Caco-2 (cell line): ENCODE measurements at regions of chr2 and their contacts with region 1.

Region 1: GRCh38 chr2:191013932-191014652 is at the start of gene STAT1:
- DNase-seq: peak; percentile 90 to 98
- H3K4me3 ChIP-seq: peak within 1 kb of the TSS; percentile 72
- H3K4me3 Mint-ChIP-seq: no peak within 1 kb of the TSS
- H3K27ac Mint-ChIP-seq: no peak within 1 kb of the TSS
- H3K4me1 ChIP-seq: peaks cover 14% of the 10 kb centered on the region
- H3K4me1 Mint-ChIP-seq: no peaks in the 10 kb centered on the region
- H3K27me3 ChIP-seq: no peaks in the 10 kb centered on the region
- H3K27me3 Mint-ChIP-seq: no peaks in the 10 kb centered on the region
- CTCF ChIP-seq: peak; percentile 13 to 23
- total RNA-seq, gene STAT1: 113 and 126 TPM in 2 replicates

Region 2: DNA sequence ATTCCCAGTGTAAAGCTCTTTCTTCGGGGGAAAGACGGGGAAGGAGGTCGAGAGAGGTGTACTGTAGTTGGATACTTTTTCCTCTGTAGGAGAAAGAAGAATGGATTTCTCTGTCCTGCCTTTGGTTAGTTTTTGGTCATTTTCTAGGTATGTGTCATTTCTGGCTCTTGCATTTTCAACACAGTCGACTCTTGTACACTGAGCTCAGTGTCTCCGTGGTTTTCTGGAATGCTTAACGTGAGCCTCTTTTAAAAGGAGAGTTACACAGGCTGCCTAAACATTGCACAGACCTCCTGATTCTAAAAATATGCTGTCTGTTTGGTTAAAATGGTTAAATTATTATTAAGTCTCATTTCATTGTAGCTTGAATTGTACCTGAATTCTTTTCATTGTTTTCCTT is 155.3 kb before region 1 on chr2:
- CTCF ChIA-PET with region 1: no interaction called
- POLR2A ChIA-PET with region 1: no interaction called
- intact Hi-C with region 1: loop called (anchors 5 kb)
- DNase-seq: no peak
- H3K4me3 ChIP-seq: no peak overlapping the region
- H3K4me3 Mint-ChIP-seq: no peak overlapping the region
- H3K27ac Mint-ChIP-seq: no peak overlapping the region
- H3K4me1 ChIP-seq: peaks cover 48% of the 10 kb centered on the region
- H3K4me1 Mint-ChIP-seq: peaks cover 44% of the 10 kb centered on the region
- H3K27me3 ChIP-seq: no peaks in the 10 kb centered on the region
- H3K27me3 Mint-ChIP-seq: no peaks in the 10 kb centered on the region
- CTCF ChIP-seq: no peak

Region 3: GRCh38 chr2:191030521-191031154 is 16.5 kb after region 1 on chr2:
- CTCF ChIA-PET with region 1: interaction called, 3 read pairs
- POLR2A ChIA-PET with region 1: interaction called, 5 read pairs
- intact Hi-C with region 1: loop called (anchors 1 kb)
- DNase-seq: peak; percentile 56 to 64
- H3K4me3 ChIP-seq: no peak overlapping the region
- H3K4me3 Mint-ChIP-seq: peak overlapping the region; percentile 43
- H3K27ac Mint-ChIP-seq: peak overlapping the region; percentile 34
- H3K4me1 ChIP-seq: peaks cover 43% of the 10 kb centered on the region
- H3K4me1 Mint-ChIP-seq: peaks cover 45% of the 10 kb centered on the region
- H3K27me3 ChIP-seq: no peaks in the 10 kb centered on the region
- H3K27me3 Mint-ChIP-seq: no peaks in the 10 kb centered on the region
- CTCF ChIP-seq: peak; percentile 63 to 75

Region 4: GRCh38 chr2:191109888-191110287 is 95.8 kb after region 1 on chr2:
- CTCF ChIA-PET with region 1: no interaction called
- POLR2A ChIA-PET with region 1: no interaction called
- intact Hi-C with region 1: no loop called
- DNase-seq: no peak
- H3K4me3 ChIP-seq: no peak overlapping the region
- H3K4me3 Mint-ChIP-seq: no peak overlapping the region
- H3K27ac Mint-ChIP-seq: no peak overlapping the region
- H3K4me1 ChIP-seq: no peaks in the 10 kb centered on the region
- H3K4me1 Mint-ChIP-seq: no peaks in the 10 kb centered on the region
- H3K27me3 ChIP-seq: no peaks in the 10 kb centered on the region
- H3K27me3 Mint-ChIP-seq: peaks cover 9% of the 10 kb centered on the region
- CTCF ChIP-seq: no peak